ENCODE measurements at regions of chr1 and their contacts with region 1.

Region 1: DNA sequence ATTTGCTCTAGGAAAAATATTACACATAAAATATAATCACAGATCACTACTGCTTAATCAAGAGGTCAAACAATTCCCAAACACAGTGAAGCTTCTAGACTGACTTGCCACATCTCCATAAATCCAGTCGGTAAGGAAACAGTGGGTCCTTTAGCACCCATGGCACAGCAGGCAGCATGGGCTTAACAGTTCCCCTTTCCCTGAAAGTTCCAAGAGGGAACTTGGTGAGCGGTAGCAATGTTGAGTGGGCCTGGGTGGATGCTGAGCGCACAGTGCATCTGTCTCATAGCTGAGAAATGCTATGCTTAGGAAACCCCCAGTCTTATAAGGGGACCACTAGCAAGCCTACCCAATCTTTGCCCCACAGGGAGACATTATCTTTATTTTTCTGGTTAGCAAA is 7.8 kb upstream of the CYB5R1 start:
- DNase-seq: no peak
- H3K4me3 ChIP-seq: no peak overlapping the region
- H3K27ac ChIP-seq: no peak overlapping the region
- H3K4me1 ChIP-seq: no peaks in the 10 kb centered on the region
- H3K27me3 ChIP-seq: no peaks in the 10 kb centered on the region
- CTCF ChIP-seq: no peak

Region 2: DNA sequence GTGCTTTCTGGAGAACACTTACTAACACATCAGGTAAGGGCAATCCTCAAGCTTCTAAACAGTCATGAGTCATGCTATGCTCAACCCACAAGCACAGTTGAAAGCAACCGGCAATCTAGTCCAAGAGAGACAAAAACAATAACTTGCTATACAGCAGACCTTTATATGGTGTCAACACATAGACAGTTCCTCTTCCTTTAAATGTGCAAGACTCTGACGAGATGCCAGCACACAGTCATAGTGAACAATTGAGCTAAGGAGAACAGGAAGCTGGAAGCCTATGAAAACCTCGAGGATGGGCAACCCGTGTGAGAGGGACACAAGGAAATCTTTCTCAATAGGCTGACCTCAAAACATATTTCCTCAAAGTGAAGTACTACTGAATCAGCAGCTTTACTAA is 22.0 kb before region 1 on chr1:
- CTCF ChIA-PET with region 1: no interaction called
- dilution Hi-C with region 1: no loop called
- in situ Hi-C with region 1: no loop called
- intact Hi-C with region 1: no loop called
- DNase-seq: peak; percentile 93
- H3K4me3 ChIP-seq: peak overlapping the region in 1 of 3 experiments; percentile 5
- H3K27ac ChIP-seq: peak overlapping the region; percentile 61
- H3K4me1 ChIP-seq: peaks cover 48% of the 10 kb centered on the region
- H3K27me3 ChIP-seq: no peaks in the 10 kb centered on the region
- CTCF ChIP-seq: no peak

Region 3: GRCh38 chr1:203006948-203007871 is 32.4 kb after region 1 on chr1 and contains the start of gene TMEM183A:
- CTCF ChIA-PET with region 1: no interaction called
- dilution Hi-C with region 1: loop called (anchors 5 kb)
- in situ Hi-C with region 1: no loop called
- intact Hi-C with region 1: no loop called
- DNase-seq: peak; percentile 95
- H3K4me3 ChIP-seq: peak within 1 kb of the TSS; percentile 72 to 96 (median 87)
- H3K27ac ChIP-seq: peak within 1 kb of the TSS; percentile 84
- H3K4me1 ChIP-seq: peaks cover 10% of the 10 kb centered on the region
- H3K27me3 ChIP-seq: no peaks in the 10 kb centered on the region
- CTCF ChIP-seq: no peak
- total RNA-seq, gene TMEM183A: 58.1 to 97.4 TPM